ENCODE measurements at regions of chr20 and their contacts with region 1.

Region 1: GRCh38 chr20:32031007-32031958 is 20.8 kb upstream of the HCK start:
- DNase-seq: peak; percentile 96
- H3K4me3 ChIP-seq: peak overlapping the region in 3 of 4 experiments; percentile 1 to 49 (median 23); a peak in 4 of 8 replicates
- H3K27ac ChIP-seq: no peak overlapping the region
- H3K4me1 ChIP-seq: peaks cover 0 to 7% (median 5%) of the 10 kb centered on the region in 4 experiments; a peak in 6 of 7 replicates
- H3K27me3 ChIP-seq: peaks cover 0 to 6% (median 0%) of the 10 kb centered on the region in 4 experiments; a peak in 2 of 7 replicates
- CTCF ChIP-seq: peak; percentile 78 to 93 (median 89)
- EP300 ChIP-seq: no peak
- POLR2A ChIP-seq: 0 out of 3 replicates have a peak, but pooled peaks of 1 of the 2 experiments have one; percentile 22
- RAD21 ChIP-seq: peak; percentile 89 to 90

Region 2: GRCh38 chr20:31835977-31836852 is 195.1 kb before region 1 on chr20:
- CTCF ChIA-PET with region 1: interaction called, 19 read pairs
- POLR2A ChIA-PET with region 1: no interaction called
- DNase-seq: no peak
- H3K4me3 ChIP-seq: no peak overlapping the region
- H3K27ac ChIP-seq: no peak overlapping the region
- H3K4me1 ChIP-seq: peaks cover 0 to 17% (median 16%) of the 10 kb centered on the region in 4 experiments; a peak in 6 of 7 replicates
- H3K27me3 ChIP-seq: no peaks in the 10 kb centered on the region
- CTCF ChIP-seq: no peak
- EP300 ChIP-seq: no peak
- POLR2A ChIP-seq: no peak
- RAD21 ChIP-seq: no peak

Region 3: DNA sequence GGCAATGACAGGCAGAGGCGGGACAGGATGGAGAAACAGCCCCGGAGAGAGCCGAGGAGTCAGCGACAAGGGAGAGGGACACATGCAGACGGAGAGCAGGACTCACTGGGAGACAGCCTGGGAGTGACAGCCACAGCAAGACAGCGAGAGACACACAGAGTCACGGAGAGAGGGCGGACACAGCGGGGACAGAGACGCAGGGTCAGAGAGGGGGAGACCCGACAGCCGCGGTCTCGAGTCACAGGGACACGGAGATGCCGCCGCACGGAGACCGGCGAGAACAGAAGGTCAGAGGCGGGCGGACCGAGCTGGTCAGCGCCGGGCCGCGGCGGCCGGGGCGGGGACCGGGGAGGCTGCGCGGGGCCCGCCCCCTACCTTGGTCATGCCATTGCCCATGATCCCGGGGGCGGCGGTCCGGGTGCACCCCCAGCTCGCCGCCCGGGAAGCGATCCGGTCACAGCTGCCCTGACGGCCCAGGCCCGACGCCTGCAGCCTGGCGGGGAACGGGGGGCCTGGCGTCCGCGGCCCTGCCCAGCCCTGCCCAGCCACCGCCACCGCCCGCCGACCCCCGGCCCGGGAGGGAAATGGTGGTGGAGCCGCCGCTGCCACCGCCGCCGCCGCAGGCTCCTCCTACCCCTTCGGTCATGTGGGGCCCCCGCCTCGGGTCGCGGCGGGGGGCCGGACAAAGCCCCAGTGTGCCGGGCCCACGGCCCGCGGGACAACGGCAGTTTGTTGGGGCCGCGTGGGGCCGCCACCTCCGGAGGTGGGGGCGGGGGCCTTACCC is 161.1 kb before region 1 on chr20 and contains the starts of genes DUSP15 and TTLL9:
- CTCF ChIA-PET with region 1: interaction called, 12 read pairs
- POLR2A ChIA-PET with region 1: no interaction called
- DNase-seq: peak in 1 of 2 experiments; percentile 79
- H3K4me3 ChIP-seq: peak within 1 kb of the TSS; percentile 47 to 89 (median 71)
- H3K27ac ChIP-seq: no peak within 1 kb of the TSS
- H3K4me1 ChIP-seq: peaks cover 0 to 12% (median 6%) of the 10 kb centered on the region in 4 experiments; a peak in 6 of 7 replicates
- H3K27me3 ChIP-seq: peaks cover 19 to 35% (median 29%) of the 10 kb centered on the region in 4 experiments
- CTCF ChIP-seq: peak in 1 of 3 experiments; percentile 0; a peak in 1 of 4 replicates
- EP300 ChIP-seq: peak in 1 of 2 experiments; percentile 45; a peak in 1 of 3 replicates
- POLR2A ChIP-seq: peak in 1 of 2 experiments; percentile 32; a peak in 1 of 3 replicates
- RAD21 ChIP-seq: 0 out of 4 replicates have a peak, but pooled peaks of 1 of the 2 experiments have one; percentile 3
- total RNA-seq, gene DUSP15: 0.91 and 1.0 TPM in 2 replicates
- total RNA-seq, gene TTLL9: not detected in 2 replicates

Region 4: DNA sequence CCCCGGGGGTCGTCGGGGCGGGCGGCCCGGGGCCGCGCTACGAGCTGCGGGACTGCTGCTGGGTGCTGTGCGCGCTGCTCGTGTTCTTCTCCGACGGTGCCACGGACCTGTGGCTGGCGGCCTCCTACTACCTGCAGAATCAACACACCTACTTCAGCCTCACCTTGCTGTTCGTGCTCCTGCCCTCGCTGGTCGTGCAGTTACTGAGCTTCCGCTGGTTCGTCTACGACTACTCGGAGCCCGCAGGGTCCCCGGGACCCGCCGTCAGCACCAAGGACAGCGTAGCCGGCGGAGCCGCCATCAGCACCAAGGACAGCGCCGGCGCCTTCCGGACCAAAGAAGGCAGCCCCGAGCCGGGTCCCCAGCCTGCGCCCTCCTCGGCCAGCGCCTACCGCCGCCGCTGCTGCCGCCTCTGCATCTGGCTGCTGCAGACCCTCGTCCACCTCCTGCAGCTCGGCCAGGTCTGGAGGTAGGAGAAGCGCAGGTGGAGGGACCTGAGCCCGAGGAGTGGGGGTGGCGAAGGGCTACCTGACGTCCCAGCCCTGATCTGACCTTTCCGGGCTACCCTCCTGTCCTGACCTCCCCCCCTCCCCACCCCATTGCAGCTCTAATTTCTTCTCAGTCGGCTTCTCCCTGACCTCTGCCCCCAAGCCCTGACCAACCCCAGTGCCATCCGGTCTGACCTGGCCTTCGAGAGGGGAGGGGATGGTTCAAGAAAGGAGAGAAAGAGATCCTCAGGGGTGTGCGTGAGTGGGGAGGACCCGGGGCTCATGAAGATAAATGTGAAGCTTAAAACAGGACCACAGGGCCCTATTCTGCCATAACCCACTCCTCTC is 62.8 kb before region 1 on chr20:
- CTCF ChIA-PET with region 1: interaction called, 10 read pairs
- POLR2A ChIA-PET with region 1: interaction called, 3 read pairs
- DNase-seq: peak; percentile 77 to 99
- H3K4me3 ChIP-seq: peak overlapping the region; percentile 43 to 70 (median 64)
- H3K27ac ChIP-seq: no peak overlapping the region
- H3K4me1 ChIP-seq: peaks cover 0 to 12% (median 7%) of the 10 kb centered on the region in 4 experiments; a peak in 5 of 7 replicates
- H3K27me3 ChIP-seq: peaks cover 0 to 8% (median 2%) of the 10 kb centered on the region in 4 experiments; a peak in 5 of 7 replicates
- CTCF ChIP-seq: peak in 1 of 3 experiments; percentile 23; a peak in 1 of 4 replicates
- EP300 ChIP-seq: peak in 1 of 2 experiments; percentile 69; a peak in 1 of 3 replicates
- POLR2A ChIP-seq: 0 out of 3 replicates have a peak, but pooled peaks of 1 of the 2 experiments have one; percentile 49
- RAD21 ChIP-seq: peak; percentile 29 to 48; a peak in 3 of 4 replicates

Region 5: GRCh38 chr20:32007787-32008616 is 23.3 kb before region 1 on chr20:
- CTCF ChIA-PET with region 1: interaction called, 13 read pairs
- POLR2A ChIA-PET with region 1: interaction called, 3 read pairs
- DNase-seq: peak in 1 of 2 experiments; percentile 62
- H3K4me3 ChIP-seq: no peak overlapping the region
- H3K27ac ChIP-seq: no peak overlapping the region; the same call in 1 of the 2 replicates
- H3K4me1 ChIP-seq: peaks cover 19 to 25% (median 22%) of the 10 kb centered on the region in 4 experiments
- H3K27me3 ChIP-seq: no peaks in the 10 kb centered on the region
- CTCF ChIP-seq: no peak
- EP300 ChIP-seq: no peak
- POLR2A ChIP-seq: no peak
- RAD21 ChIP-seq: no peak

Region 6: DNA sequence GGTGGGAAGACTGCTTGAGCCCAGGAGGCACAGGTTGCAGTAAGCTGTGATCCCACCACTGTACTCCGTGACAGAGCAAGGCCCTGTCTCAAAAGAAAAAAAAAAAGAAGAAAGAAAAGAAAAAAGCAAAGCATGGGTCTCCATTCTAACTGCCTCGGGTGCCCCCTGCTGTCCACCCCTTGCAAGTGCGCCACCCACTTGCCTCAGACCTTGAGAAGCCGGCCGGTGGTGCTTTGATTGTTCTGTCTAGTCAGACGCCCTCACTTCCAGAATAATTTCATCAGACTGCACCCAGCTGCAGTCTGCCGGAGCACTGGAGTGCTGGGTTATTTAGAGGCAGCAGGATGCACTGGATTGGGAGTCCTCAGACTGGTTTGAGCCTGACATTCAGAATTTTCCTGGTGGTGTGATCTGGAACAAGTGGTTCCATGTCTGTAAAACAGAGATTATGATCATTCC is 60.6 kb after region 1 on chr20:
- CTCF ChIA-PET with region 1: interaction called, 176 read pairs
- POLR2A ChIA-PET with region 1: no interaction called
- DNase-seq: peak; percentile 62 to 93
- H3K4me3 ChIP-seq: no peak overlapping the region
- H3K27ac ChIP-seq: no peak overlapping the region
- H3K4me1 ChIP-seq: peaks cover 16 to 26% (median 24%) of the 10 kb centered on the region in 4 experiments
- H3K27me3 ChIP-seq: no peaks in the 10 kb centered on the region; a peak in 1 of 7 replicates
- CTCF ChIP-seq: peak; percentile 95 to 97 (median 96)
- EP300 ChIP-seq: 0 out of 3 replicates have a peak, but pooled peaks of 1 of the 2 experiments have one; percentile 57
- POLR2A ChIP-seq: no peak
- RAD21 ChIP-seq: peak; percentile 89 to 93

Measured in H1 (cell line).